ENCODE measurements at regions of chr19 and their contacts with region 1.

Region 1: GRCh38 chr19:47124937-47125668 is 5.5 kb upstream of the SAE1 start:
- DNase-seq: no peak
- ATAC-seq: peak; percentile 76
- H3K4me3 ChIP-seq: no peak overlapping the region
- H3K27ac ChIP-seq: no peak overlapping the region
- H3K4me1 ChIP-seq: no peaks in the 10 kb centered on the region; the same call in 1 of the 2 replicates
- H3K27me3 ChIP-seq: no peaks in the 10 kb centered on the region
- CTCF ChIP-seq: peak; percentile 59 to 81 (median 65)
- EP300 ChIP-seq: no peak
- POLR2A ChIP-seq: no peak
- RAD21 ChIP-seq: peak; percentile 89

Region 2: GRCh38 chr19:47075179-47075810 is 49.8 kb before region 1 on chr19:
- CTCF ChIA-PET with region 1: interaction called, 77 read pairs
- POLR2A ChIA-PET with region 1: interaction called, 7 read pairs
- RAD21 ChIA-PET with region 1: interaction called, 39 read pairs
- SMC1A ChIA-PET with region 1: interaction called, 28 read pairs
- in situ Hi-C with region 1: loop called (anchors 5 kb)
- intact Hi-C with region 1: loop called (anchors 1 kb)
- DNase-seq: no peak
- ATAC-seq: no peak
- H3K4me3 ChIP-seq: no peak overlapping the region
- H3K27ac ChIP-seq: no peak overlapping the region
- H3K4me1 ChIP-seq: no peaks in the 10 kb centered on the region
- H3K27me3 ChIP-seq: no peaks in the 10 kb centered on the region
- CTCF ChIP-seq: no peak
- EP300 ChIP-seq: no peak
- POLR2A ChIP-seq: 0 out of 2 replicates have a peak, but pooled peaks have one; percentile 21
- RAD21 ChIP-seq: no peak

Region 3: GRCh38 chr19:47081111-47081510 is 44.0 kb before region 1 on chr19:
- CTCF ChIA-PET with region 1: interaction called, 77 read pairs
- POLR2A ChIA-PET with region 1: interaction called, 7 read pairs
- RAD21 ChIA-PET with region 1: interaction called, 39 read pairs
- SMC1A ChIA-PET with region 1: interaction called, 28 read pairs
- in situ Hi-C with region 1: loop called (anchors 5 kb)
- intact Hi-C with region 1: loop called (anchors 1 kb)
- DNase-seq: no peak
- ATAC-seq: no peak
- H3K4me3 ChIP-seq: no peak overlapping the region
- H3K27ac ChIP-seq: no peak overlapping the region
- H3K4me1 ChIP-seq: no peaks in the 10 kb centered on the region
- H3K27me3 ChIP-seq: no peaks in the 10 kb centered on the region
- CTCF ChIP-seq: no peak
- EP300 ChIP-seq: no peak
- POLR2A ChIP-seq: no peak
- RAD21 ChIP-seq: no peak

Region 4: DNA sequence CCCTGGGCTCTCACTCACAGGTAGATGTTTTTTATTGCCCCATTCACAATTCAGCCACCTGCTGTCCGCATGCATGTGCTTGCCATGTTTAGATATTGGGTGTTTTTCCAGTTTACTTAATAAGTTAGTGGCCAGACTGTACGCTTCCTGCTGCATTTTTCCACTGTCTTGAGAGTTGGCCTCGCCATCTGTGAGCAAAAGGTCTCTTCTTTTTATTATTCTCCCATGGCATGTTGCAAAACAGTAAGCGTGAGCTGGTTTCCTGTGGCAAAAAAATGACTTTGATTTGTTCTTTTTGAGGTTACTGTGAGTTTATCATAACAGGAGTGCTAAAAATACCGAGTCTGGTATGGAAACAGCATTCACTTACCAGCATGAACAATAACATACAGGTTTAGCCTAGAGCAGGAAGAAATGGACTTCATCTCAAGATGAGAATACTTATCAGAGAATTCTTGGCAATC is 51.6 kb after region 1 on chr19:
- CTCF ChIA-PET with region 1: no interaction called
- POLR2A ChIA-PET with region 1: no interaction called
- RAD21 ChIA-PET with region 1: no interaction called
- SMC1A ChIA-PET with region 1: no interaction called
- in situ Hi-C with region 1: no loop called
- intact Hi-C with region 1: no loop called
- DNase-seq: no peak
- ATAC-seq: no peak
- H3K4me3 ChIP-seq: no peak overlapping the region
- H3K27ac ChIP-seq: 0 out of 2 replicates have a peak overlapping the region, but pooled peaks have one; percentile 8
- H3K4me1 ChIP-seq: peaks cover 8% of the 10 kb centered on the region
- H3K27me3 ChIP-seq: no peaks in the 10 kb centered on the region
- CTCF ChIP-seq: no peak
- EP300 ChIP-seq: no peak
- POLR2A ChIP-seq: no peak
- RAD21 ChIP-seq: no peak